Vagina (tissue), 2 donors: ENCODE measurements at regions of chr2 and their contacts with region 1.

Region 1: GRCh38 chr2:236570081-236570868 is 650 bp downstream of the ACKR3 start:
- DNase-seq: no peak
- H3K4me3 ChIP-seq: peak overlapping the region; percentile 53 to 69
- H3K27ac ChIP-seq: peak overlapping the region; percentile 93
- H3K4me1 ChIP-seq: peaks cover 61% of the 10 kb centered on the region
- H3K27me3 ChIP-seq: no peaks in the 10 kb centered on the region
- CTCF ChIP-seq: no peak
- POLR2A ChIP-seq: no peak

Region 2: GRCh38 chr2:236968101-236968879 is 398.0 kb after region 1 on chr2:
- intact Hi-C with region 1: loop called (anchors 5 kb)
- DNase-seq: no peak
- H3K4me3 ChIP-seq: no peak overlapping the region
- H3K27ac ChIP-seq: no peak overlapping the region
- H3K4me1 ChIP-seq: peaks cover 23% of the 10 kb centered on the region
- H3K27me3 ChIP-seq: no peaks in the 10 kb centered on the region
- CTCF ChIP-seq: no peak
- POLR2A ChIP-seq: no peak